Ascending aorta (tissue), 2 donors: ENCODE measurements at regions of chr22 and their contacts with region 1.

Region 1: DNA sequence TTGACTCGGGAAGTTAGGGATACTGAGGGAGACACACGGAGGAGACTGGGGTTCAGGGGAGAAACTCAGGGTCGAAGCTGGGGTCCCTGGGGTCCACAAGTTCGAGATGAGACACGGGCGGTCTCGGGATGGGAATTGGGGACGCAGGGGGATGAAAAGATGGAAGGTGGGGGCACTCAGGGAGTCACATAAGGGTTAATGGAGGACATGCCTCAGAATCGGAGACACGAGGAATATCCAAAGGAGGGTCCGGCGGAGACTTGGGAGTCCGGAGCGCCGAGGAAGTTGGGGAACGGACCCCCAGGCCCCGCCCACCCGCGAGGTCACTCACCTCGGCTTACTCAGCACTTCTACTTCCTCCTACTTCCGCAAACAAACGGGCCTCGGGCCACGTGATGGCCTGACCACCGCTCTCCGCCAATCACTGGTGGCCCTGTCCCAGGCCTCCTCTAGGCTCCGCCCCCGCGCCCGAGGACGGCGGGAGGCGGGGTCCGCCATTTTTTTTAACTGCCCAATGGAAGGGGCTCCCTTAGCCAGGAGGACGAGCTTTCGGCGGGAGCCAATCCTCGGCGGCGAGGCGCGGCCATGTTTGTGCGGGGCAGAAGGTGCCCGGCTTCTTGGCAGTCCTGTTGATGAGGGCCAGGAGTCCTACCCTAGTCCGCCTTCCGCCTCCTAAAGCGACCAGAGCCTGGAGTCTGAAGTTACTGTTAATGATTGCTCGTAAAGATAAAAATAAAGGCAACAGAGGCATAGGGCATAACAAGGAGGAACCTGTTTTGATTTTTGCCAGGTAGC is at the start of gene PLA2G6:
- DNase-seq: peak; percentile 97 to 99
- H3K4me3 ChIP-seq: peak within 1 kb of the TSS; percentile 56 to 67
- H3K27ac ChIP-seq: peak within 1 kb of the TSS; percentile 81 to 82
- H3K4me1 ChIP-seq: peaks cover 7 to 18% of the 10 kb centered on the region in 2 donors
- H3K27me3 ChIP-seq: no peaks in the 10 kb centered on the region
- CTCF ChIP-seq: no peak
- total RNA-seq, gene PLA2G6: 79.5 TPM

Region 2: DNA sequence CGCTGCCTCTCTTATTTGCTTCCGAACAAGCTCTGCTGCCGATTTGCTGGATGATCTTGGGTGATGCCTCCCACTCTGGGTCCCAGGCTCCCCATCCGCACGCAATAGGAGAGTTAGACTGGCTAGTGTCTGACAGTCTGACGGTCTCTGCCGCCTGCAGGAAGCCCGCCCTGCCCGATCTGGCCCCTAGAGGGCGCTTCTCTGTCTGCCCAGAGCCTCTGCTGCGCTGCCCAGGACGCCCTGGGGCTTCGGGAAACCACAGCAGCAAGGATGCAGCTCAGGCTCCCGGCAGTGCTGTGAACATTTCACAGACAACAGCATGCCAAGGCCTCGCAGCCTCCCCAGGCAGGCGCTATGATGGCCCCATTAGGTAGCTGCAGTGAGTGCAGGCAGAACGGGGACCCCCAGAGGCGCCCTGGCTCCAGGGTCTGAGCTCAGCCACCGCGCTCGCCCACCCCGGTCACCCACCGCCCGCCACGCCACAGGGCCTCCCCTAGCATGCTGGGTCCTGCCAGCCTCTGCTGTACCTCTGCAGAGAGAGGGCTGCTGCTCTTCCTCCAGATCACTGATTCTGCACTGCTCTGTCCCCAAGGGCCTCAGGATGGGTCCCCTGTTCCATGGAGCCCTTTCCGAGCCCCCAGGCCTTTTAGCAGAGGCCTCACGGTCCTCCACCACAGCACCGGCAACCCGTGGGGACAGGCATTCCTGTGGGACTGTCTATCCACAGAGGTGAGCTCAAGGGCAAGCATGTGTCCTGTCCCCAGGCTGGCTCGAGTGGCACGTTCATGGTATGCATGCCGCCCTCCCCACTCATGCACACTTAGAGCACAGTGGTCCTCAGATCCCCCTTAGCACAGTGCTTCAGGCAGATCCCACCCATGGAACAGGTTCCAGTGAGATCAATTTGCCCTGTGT is 66.9 kb before region 1 on chr22:
- intact Hi-C with region 1: loop called (anchors 5 kb)
- DNase-seq: peak; percentile 27 to 89
- H3K4me3 ChIP-seq: no peak overlapping the region
- H3K27ac ChIP-seq: no peak overlapping the region
- H3K4me1 ChIP-seq: peaks cover 0 to 15% of the 10 kb centered on the region in 2 donors
- H3K27me3 ChIP-seq: no peaks in the 10 kb centered on the region
- CTCF ChIP-seq: peak; percentile 94 to 97 (median 95)

Region 3: GRCh38 chr22:38214256-38215056 is 32.8 kb after region 1 on chr22:
- intact Hi-C with region 1: loop called (anchors 5 kb)
- DNase-seq: no peak
- H3K4me3 ChIP-seq: peak overlapping the region in 1 of 2 donors; percentile 50
- H3K27ac ChIP-seq: peak overlapping the region; percentile 30 to 35
- H3K4me1 ChIP-seq: peaks cover 21 to 29% of the 10 kb centered on the region in 2 donors
- H3K27me3 ChIP-seq: no peaks in the 10 kb centered on the region
- CTCF ChIP-seq: peak in 1 of 3 experiments; percentile 24